Sigmoid colon (tissue), 7 donors: ENCODE measurements at regions of chr20 and their contacts with region 1.

Region 1: DNA sequence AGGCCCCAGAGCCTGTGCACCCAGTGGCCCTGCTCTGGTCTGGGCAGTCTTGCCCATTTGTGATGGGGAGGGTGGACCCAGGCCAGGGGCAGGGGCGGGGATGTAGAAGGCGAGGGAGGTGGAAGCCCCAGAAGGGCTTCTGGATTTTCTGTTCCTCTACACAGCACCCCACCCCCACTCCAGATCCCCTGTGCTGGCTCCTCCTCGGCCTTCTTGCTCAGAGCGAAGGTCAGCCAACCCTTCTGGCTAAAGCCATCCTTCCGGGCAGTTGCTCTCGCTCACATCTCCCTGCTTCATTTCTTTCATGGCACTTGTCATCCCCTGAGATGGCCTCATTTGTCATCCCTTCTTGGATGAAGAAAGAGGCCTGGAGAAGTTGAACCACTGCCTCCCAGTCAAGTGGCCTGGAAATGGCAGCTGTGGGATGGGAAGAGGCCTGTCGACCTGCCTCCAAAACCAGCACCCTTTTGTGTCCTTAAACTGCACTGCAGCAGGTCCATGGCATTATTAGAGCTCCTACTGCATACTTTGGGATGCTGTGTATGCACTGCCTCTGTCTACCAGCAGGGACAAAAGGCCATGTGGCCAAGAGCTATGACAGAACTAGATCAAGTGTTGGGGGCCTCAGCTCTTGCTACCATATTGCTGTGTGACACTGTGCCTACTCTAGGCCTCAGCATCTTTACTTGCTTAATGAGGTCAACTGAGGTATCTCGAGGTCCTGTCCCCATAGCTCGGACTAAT is 19.9 kb downstream of the PEDS1 start:
- DNase-seq: no peak
- H3K4me3 ChIP-seq: no peak overlapping the region
- H3K27ac ChIP-seq: peak overlapping the region; percentile 78 to 88 (median 85)
- H3K4me1 ChIP-seq: peaks cover 0 to 63% (median 62%) of the 10 kb centered on the region in 4 donors
- H3K27me3 ChIP-seq: no peaks in the 10 kb centered on the region
- CTCF ChIP-seq: no peak
- EP300 ChIP-seq: no peak
- POLR2A ChIP-seq: no peak

Region 2: DNA sequence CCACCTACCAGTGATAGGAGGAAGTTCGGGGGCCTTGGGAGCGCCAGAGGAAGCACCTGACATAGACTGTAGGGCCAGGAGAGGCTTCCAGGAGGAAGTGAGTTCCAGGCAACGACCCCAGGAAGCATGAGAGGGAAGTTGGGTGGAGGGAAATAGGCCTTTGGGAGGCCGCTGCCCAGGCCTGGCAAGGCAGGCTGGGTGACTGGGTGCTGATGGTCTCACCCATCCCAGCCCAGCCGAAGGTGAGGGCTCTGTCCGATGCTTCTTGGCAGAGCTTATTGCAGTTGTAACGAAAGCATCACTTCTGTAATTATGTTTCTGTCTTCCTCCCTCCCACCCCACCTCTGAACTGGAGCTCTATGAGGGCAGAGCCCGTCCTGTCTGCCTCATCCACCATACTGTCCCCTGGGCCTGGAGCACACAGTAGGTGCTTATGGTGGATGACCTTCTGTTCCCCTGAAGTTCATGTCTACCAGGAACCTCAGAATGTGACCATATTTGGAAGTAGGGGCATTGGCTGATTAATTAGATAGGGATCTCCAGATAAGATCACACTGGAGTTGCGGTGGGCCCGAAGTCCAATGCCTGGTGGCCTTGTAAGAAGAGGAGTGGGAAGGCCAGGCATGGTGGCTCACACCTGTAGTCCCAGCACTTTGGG is 74.8 kb before region 1 on chr20:
- intact Hi-C with region 1: no loop called
- DNase-seq: no peak
- H3K4me3 ChIP-seq: no peak overlapping the region
- H3K27ac ChIP-seq: no peak overlapping the region
- H3K4me1 ChIP-seq: peaks cover 0 to 13% (median 10%) of the 10 kb centered on the region in 4 donors
- H3K27me3 ChIP-seq: no peaks in the 10 kb centered on the region
- CTCF ChIP-seq: no peak
- EP300 ChIP-seq: no peak
- POLR2A ChIP-seq: no peak

Region 3: GRCh38 chr20:50150916-50151743 is 17.5 kb after region 1 on chr20:
- intact Hi-C with region 1: loop called (anchors 2 kb)
- DNase-seq: no peak
- H3K4me3 ChIP-seq: no peak overlapping the region
- H3K27ac ChIP-seq: peak overlapping the region; percentile 19 to 95 (median 90)
- H3K4me1 ChIP-seq: peaks cover 0 to 76% (median 65%) of the 10 kb centered on the region in 4 donors
- H3K27me3 ChIP-seq: no peaks in the 10 kb centered on the region
- CTCF ChIP-seq: no peak
- EP300 ChIP-seq: no peak
- POLR2A ChIP-seq: no peak